Activated CD4-positive, alpha-beta T cell treated with anti-CD3 and anti-CD28 coated beads for 36 hours (primary cell): ENCODE measurements at regions of chr16 and their contacts with region 1.

Region 1: GRCh38 chr16:7653746-7654461 is 321.3 kb downstream of the RBFOX1 start:
- DNase-seq: no peak
- ATAC-seq: no peak
- H3K4me3 Mint-ChIP-seq: no peak overlapping the region
- H3K27ac Mint-ChIP-seq: no peak overlapping the region
- H3K4me1 Mint-ChIP-seq: no peaks in the 10 kb centered on the region
- H3K27me3 Mint-ChIP-seq: no peaks in the 10 kb centered on the region

Region 2: GRCh38 chr16:7382521-7382920 is 271.4 kb before region 1 on chr16:
- CTCF ChIA-PET with region 1: no interaction called
- POLR2A ChIA-PET with region 1: no interaction called
- intact Hi-C with region 1: loop called in 1 of 2 experiments (anchors 5 kb)
- DNase-seq: no peak
- ATAC-seq: no peak
- H3K4me3 Mint-ChIP-seq: no peak overlapping the region
- H3K27ac Mint-ChIP-seq: no peak overlapping the region
- H3K4me1 Mint-ChIP-seq: no peaks in the 10 kb centered on the region
- H3K27me3 Mint-ChIP-seq: no peaks in the 10 kb centered on the region

Region 3: DNA sequence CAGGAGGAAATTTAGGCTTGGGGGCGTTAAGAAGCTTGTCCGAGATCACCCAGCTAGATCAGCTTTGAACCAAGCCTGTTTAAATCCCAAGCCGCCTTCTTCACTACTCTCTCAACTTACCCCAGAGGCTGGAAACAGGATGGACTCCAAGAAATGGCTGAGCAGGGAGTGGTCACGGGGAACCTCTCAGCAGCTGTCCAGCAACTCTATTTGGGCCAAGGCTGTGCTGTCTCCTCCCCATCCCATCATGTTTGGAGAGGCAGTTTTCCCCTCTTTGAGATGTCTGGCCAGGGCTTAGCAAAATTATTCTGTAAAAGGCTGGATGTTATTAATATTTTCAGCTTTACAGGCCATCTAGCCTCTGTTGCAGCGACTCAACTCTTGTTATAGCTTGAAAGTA is 15.6 kb before region 1 on chr16:
- CTCF ChIA-PET with region 1: no interaction called
- POLR2A ChIA-PET with region 1: no interaction called
- intact Hi-C with region 1: no loop called
- DNase-seq: no peak
- ATAC-seq: no peak
- H3K4me3 Mint-ChIP-seq: no peak overlapping the region
- H3K27ac Mint-ChIP-seq: no peak overlapping the region
- H3K4me1 Mint-ChIP-seq: no peaks in the 10 kb centered on the region
- H3K27me3 Mint-ChIP-seq: no peaks in the 10 kb centered on the region

Region 4: GRCh38 chr16:7731141-7731540 is 77.2 kb after region 1 on chr16:
- CTCF ChIA-PET with region 1: no interaction called
- POLR2A ChIA-PET with region 1: no interaction called
- intact Hi-C with region 1: no loop called
- DNase-seq: no peak
- ATAC-seq: no peak
- H3K4me3 Mint-ChIP-seq: no peak overlapping the region
- H3K27ac Mint-ChIP-seq: no peak overlapping the region
- H3K4me1 Mint-ChIP-seq: no peaks in the 10 kb centered on the region
- H3K27me3 Mint-ChIP-seq: no peaks in the 10 kb centered on the region